Posterior vena cava (tissue), 2 donors: ENCODE measurements at regions of chr4 and their contacts with region 1.

Region 1: GRCh38 chr4:18803781-18804180 is 782.2 kb upstream of the LCORL start:
- DNase-seq: no peak

Region 2: GRCh38 chr4:18777190-18777589 is 26.6 kb before region 1 on chr4:
- intact Hi-C with region 1: loop called in 1 of 2 experiments (anchors 1 kb)
- DNase-seq: no peak